Posterior cingulate gyrus (tissue), 11 donors: ENCODE measurements at regions of chr1 and their contacts with region 1.

Region 1: DNA sequence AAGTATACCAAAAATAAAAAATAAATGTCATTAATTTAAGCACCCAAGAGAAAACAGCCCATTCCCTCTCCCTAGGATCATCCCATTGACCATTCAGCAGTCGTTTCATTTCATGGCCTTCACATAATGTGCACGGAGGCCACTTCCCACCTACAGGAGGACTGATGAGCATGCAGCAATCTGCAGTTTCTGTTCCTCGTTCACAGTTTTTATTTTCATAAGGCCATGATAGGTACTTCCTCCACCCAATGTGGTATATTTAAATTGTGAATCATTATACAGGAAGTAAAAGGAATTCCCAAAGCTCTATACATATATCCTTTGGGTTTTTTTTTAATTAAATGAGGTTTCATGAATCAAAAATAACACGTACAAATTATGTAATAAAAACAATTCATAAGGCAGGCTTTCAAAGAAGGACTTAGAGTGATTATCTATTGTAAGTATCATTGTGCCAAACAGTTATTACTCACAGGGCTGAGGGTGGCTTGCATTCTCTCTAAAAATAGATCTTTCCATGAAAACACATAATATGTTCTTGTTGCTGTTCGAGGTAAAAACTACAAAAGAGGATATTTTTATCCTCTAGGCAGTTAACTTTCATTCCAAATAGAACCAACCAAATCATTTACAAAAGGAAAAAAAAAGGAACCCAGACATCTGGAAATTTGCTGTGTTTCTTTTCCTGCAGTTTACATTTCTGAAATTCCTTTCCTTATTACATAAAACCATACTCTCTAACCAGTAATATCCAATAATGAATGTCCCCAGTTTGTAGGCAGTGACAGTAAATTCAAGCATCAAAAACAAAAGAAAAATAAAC is 27.5 kb upstream of the SLC44A3 start:
- DNase-seq: no peak

Region 2: GRCh38 chr1:94417978-94418663 is 374.6 kb before region 1 on chr1 and contains the start of gene ABCD3:
- intact Hi-C with region 1: loop called (anchors 5 kb)
- DNase-seq: peak; percentile 90 to 99 (median 94)

Region 3: DNA sequence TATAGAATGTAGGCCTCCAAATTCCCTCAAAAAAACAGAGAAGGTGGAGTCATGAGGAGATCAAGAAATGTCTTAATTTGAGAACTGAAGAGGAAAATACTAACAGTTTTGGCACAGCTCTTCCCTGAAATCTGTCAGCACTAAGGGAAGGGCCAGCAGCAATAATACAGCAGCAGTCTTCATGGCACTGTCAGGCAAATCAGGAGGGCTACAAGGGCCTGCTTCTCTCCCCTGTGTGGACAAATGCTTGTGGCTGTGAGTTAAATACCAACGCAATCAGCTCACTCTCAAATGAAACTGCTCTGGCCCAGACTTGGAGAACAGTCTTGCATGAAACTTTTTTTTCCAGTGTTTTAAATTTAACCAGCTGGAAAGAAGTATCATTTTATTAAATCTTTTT is 154.8 kb after region 1 on chr1:
- intact Hi-C with region 1: no loop called
- DNase-seq: no peak